BJ (cell line): ENCODE measurements at regions of chr11 and their contacts with region 1.

Region 1: GRCh38 chr11:16613512-16614381 is 124.7 kb upstream of the C11orf58 start:
- DNase-seq: no peak
- H3K4me3 ChIP-seq: peak overlapping the region; percentile 43
- H3K27me3 ChIP-seq: peaks cover 39% of the 10 kb centered on the region
- CTCF ChIP-seq: peak; percentile 90

Region 2: GRCh38 chr11:15650105-15650938 is 963.4 kb before region 1 on chr11:
- CTCF ChIA-PET with region 1: interaction called, 50 read pairs
- POLR2A ChIA-PET with region 1: no interaction called
- DNase-seq: peak; percentile 39
- H3K4me3 ChIP-seq: peak overlapping the region; percentile 40
- H3K27me3 ChIP-seq: peaks cover 4% of the 10 kb centered on the region
- CTCF ChIP-seq: peak; percentile 97

Region 3: GRCh38 chr11:15770798-15771414 is 842.8 kb before region 1 on chr11:
- CTCF ChIA-PET with region 1: interaction called, 11 read pairs
- POLR2A ChIA-PET with region 1: no interaction called
- DNase-seq: no peak
- H3K4me3 ChIP-seq: no peak overlapping the region
- H3K27me3 ChIP-seq: no peaks in the 10 kb centered on the region; the same call in 1 of the 2 replicates
- CTCF ChIP-seq: peak; percentile 64

Region 4: DNA sequence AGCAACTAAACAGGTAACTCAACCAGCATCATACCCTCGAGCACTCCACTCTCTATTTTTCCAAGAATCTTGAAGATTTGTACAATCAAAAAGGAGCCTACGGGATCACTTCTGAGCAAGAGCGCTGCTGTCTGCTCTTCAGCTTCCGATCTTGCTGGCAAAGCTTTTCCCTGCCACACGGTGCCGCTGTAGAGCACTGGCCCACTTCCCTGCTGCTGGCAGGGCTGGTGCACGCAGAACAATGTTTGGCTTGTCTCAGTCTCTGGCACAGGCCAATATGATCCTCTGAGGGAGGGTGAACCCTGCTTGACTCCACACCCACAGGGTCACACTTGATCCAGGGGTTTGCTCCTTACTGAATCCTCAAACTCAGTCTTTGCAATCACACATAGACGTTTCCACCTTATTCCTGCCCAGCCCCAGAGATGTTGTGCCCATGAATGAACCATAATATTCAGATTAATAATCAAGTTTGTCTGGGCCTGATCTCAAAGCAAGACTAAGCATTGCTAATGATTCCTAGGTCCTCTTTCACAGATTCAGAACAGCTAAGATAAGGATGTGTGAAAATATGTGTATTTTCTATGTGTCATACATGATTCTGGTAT is 794.0 kb before region 1 on chr11:
- CTCF ChIA-PET with region 1: interaction called, 26 read pairs
- POLR2A ChIA-PET with region 1: no interaction called
- DNase-seq: no peak
- H3K4me3 ChIP-seq: no peak overlapping the region
- H3K27me3 ChIP-seq: no peaks in the 10 kb centered on the region; the same call in 1 of the 2 replicates
- CTCF ChIP-seq: peak; percentile 93

Region 5: DNA sequence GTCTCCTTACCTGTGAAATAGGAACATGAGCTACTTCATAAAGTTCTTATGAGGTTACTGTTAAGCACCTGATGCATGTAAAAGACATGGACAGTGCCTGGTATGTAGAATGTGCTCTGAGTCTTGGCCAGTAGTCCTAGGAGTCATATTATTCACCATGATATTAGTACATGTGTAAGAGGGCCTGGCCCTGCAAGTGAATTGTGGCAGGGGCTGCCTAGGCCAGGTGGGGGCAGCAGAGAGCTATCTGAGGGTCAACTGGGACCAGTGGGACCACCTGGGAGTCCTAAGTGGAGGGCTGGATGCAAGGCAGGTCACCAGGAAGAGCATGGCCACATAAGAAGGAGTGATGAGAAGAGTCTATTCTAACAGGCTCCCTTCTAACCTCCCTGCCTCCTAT is 786.9 kb before region 1 on chr11:
- CTCF ChIA-PET with region 1: interaction called, 26 read pairs
- POLR2A ChIA-PET with region 1: no interaction called
- DNase-seq: no peak
- H3K4me3 ChIP-seq: no peak overlapping the region
- H3K27me3 ChIP-seq: no peaks in the 10 kb centered on the region
- CTCF ChIP-seq: peak; percentile 53

Region 6: GRCh38 chr11:15941201-15941770 is 672.5 kb before region 1 on chr11:
- CTCF ChIA-PET with region 1: interaction called, 26 read pairs
- POLR2A ChIA-PET with region 1: no interaction called
- DNase-seq: no peak
- H3K4me3 ChIP-seq: no peak overlapping the region
- H3K27me3 ChIP-seq: peaks cover under 1% of the 10 kb centered on the region; the same call in 1 of the 2 replicates
- CTCF ChIP-seq: peak; percentile 87